ENCODE measurements at regions of chr1 and their contacts with region 1.

Region 1: GRCh38 chr1:29626066-29626465 is 389.7 kb downstream of the PTPRU start:
- DNase-seq: no peak
- ATAC-seq: no peak
- H3K4me3 ChIP-seq: no peak overlapping the region
- H3K27ac ChIP-seq: no peak overlapping the region
- H3K4me1 ChIP-seq: no peaks in the 10 kb centered on the region
- H3K27me3 ChIP-seq: no peaks in the 10 kb centered on the region

Region 2: DNA sequence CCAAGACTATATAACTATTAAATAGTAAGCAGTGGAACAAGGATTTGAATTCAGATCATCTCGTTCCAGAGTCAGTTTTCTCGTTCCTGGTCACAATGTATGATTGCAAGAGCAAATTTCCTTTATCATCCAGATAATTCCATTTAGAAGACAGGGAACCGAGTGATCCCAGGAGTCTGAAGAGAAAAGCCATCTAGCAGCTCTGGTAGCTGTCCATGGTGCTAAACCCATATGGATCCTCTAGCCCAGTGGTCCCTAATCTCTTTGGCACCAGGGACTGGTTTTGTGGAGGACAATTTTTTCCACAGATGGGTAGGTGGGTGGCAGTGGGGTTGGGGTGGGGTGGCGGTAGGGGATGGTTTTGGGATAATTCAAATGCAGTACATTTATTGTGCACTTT is 160.3 kb before region 1 on chr1:
- intact Hi-C with region 1: no loop called
- DNase-seq: no peak
- ATAC-seq: no peak
- H3K4me3 ChIP-seq: no peak overlapping the region
- H3K27ac ChIP-seq: no peak overlapping the region
- H3K4me1 ChIP-seq: no peaks in the 10 kb centered on the region
- H3K27me3 ChIP-seq: peaks cover 0 to 1% of the 10 kb centered on the region in 2 donors

Region 3: DNA sequence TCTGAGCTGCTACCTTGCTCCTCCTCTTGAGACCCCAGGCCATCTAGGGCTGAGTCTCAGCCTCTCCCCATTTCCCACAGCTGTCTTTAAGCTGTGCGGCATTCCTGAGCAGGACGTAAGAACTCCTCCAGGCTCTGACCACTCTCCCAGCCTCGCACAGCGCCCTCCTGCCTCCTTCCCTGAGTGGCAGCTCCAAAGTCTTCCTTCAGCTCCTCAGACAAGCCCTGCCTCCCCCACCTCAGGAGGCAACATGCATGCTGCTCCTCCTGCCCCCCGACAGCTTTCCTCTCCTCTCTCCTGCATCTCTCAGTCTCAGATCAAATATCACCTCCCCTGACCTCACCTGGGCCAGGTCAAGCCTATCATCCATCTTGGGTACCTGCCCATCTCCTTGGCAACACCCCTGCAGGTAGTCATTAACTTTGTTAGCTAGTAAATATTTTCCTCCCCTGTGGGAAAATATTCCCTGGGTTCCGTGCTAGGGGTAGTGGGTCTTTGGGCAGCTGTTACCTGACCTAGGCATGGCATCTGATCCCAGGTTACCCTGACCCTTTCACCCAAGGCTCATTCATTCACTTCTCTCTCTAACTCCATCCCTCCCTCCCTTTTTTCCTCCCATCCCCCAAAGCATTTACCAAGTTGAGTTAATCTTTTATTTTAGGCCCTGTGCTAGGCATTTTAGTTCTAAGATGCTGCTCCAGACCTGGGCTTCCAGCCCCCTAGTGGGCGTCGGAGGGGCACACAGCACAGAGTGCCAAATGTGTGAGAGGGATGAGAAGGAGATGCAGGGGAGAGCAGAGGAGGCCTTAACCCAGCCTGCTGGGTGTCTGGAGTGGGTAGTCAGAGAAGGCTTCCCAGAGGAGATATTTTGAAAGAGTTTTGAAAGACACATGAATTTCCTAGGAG is 30.1 kb after region 1 on chr1:
- intact Hi-C with region 1: loop called in 1 of 2 experiments (anchors 2 kb)
- DNase-seq: peak in 1 of 2 donors; percentile 26
- ATAC-seq: no peak
- H3K4me3 ChIP-seq: no peak overlapping the region
- H3K27ac ChIP-seq: no peak overlapping the region
- H3K4me1 ChIP-seq: no peaks in the 10 kb centered on the region
- H3K27me3 ChIP-seq: no peaks in the 10 kb centered on the region